Cardiac septum (tissue), 1 donor: ENCODE measurements at regions of chr7 and their contacts with region 1.

Region 1: DNA sequence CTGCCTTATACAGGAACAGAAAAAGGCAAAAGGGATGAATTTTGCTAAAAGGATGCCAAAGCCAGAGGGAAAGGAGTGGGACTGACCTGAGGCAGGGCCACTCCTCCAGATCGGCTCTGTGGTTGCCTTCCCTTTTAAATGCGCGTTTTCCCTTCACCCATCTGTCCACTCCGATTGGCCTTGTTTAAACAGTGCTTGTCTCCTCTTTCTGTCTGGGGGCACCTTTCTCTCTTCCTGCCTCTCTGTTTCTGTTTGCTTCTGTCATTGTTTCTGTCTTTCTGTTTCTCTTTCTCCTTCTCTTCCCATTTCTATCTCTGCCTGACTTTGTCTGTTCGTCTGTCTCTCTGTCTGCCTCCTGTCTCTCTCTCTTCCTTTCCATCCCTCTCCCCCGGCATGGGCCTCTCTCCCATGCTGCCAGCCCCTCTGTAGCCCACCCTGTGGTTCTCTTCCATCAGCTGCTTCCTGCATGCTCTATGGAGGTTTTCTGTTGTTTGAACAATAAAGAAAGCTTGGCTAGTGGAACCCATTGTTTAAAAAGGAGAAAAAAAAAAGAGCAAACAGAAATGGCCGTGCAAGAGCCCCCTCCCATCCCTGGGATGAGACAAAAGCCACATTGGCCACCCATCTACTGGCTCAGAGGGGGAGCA is 29.5 kb upstream of the HSPB1 start:
- DNase-seq: no peak

Region 2: GRCh38 chr7:76185187-76185896 is 87.6 kb before region 1 on chr7:
- intact Hi-C with region 1: loop called (anchors 5 kb)
- DNase-seq: no peak